Mammary epithelial cell (primary cell): ENCODE measurements at regions of chr14 and their contacts with region 1.

Region 1: DNA sequence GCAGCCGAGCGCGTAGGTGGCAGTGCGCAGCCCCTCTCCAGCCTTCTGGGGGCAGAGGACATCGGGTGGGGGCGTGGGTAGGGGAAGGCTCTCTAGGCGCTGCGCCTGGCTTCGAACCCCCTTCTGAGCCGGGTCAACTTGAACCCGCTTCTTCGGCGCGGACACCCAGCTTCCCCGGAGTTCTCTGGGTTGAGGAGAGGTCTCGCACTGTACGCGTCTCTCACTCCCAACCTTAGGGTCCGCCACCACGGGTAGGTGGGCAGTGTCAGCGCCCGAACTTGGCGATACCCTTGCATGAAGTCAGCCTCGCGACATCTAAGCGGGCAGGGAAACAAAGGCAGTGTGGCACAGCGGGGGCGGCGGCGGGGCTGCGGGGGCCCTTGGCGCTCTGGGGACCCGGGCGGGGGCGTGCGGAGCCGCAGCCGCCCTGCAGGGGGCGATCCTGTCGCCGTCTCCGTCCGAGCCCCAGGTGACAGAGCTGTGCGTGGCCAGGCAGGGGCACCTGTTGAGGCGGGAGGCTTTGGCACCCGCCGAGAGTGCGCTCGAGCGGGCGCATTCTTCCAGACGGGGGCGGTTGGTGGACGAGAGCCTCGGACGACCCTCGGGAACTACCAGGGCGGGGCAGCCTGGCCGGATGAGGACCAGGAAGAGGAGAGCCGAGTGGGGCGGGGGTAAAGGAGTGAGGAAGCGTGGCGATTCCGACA is 1.1 kb downstream of the GALNT16 start:
- DNase-seq: no peak
- H3K4me3 ChIP-seq: peak overlapping the region in 2 of 3 experiments; percentile 19 to 43
- H3K27ac ChIP-seq: no peak overlapping the region
- H3K4me1 ChIP-seq: peaks cover 14% of the 10 kb centered on the region
- H3K27me3 ChIP-seq: peaks cover 34% of the 10 kb centered on the region
- CTCF ChIP-seq: peak; percentile 29 to 49

Region 2: GRCh38 chr14:69312608-69313007 is 51.6 kb after region 1 on chr14:
- CTCF ChIA-PET with region 1: no interaction called
- dilution Hi-C with region 1: loop called (anchors 5 kb)
- in situ Hi-C with region 1: no loop called
- intact Hi-C with region 1: no loop called
- DNase-seq: no peak
- H3K4me3 ChIP-seq: no peak overlapping the region
- H3K27ac ChIP-seq: no peak overlapping the region
- H3K4me1 ChIP-seq: peaks cover 3% of the 10 kb centered on the region
- H3K27me3 ChIP-seq: peaks cover 4% of the 10 kb centered on the region
- CTCF ChIP-seq: no peak

Region 3: DNA sequence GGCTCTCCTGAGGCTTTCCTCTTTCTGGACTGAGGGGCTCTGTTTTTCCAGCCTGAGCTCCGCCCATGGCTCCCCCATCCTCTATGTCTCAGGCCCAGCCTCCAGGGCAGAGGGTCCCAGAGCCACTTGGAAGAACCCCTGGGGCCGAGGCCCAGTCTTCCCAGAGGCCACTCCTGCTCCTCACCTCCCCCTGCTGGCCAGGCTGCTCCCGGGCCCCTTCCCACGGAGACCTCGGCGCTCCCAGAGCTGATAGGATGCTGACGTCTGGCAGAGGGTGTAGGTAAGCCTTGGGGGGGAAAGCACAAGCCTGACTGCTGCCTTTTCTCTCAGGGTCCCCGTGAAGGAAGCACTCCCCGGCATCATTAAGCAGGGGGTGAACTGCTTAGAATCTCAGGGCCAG is 85.7 kb after region 1 on chr14:
- CTCF ChIA-PET with region 1: no interaction called
- dilution Hi-C with region 1: loop called (anchors 5 kb)
- in situ Hi-C with region 1: no loop called
- intact Hi-C with region 1: loop called (anchors 5 kb)
- DNase-seq: no peak
- H3K4me3 ChIP-seq: no peak overlapping the region
- H3K27ac ChIP-seq: no peak overlapping the region
- H3K4me1 ChIP-seq: no peaks in the 10 kb centered on the region
- H3K27me3 ChIP-seq: no peaks in the 10 kb centered on the region
- CTCF ChIP-seq: peak; percentile 39 to 47

Region 4: GRCh38 chr14:69354383-69355153 is 93.6 kb after region 1 on chr14:
- CTCF ChIA-PET with region 1: interaction called, 4 read pairs
- dilution Hi-C with region 1: loop called (anchors 5 kb)
- in situ Hi-C with region 1: no loop called
- intact Hi-C with region 1: loop called (anchors 5 kb)
- DNase-seq: peak; percentile 64
- H3K4me3 ChIP-seq: no peak overlapping the region
- H3K27ac ChIP-seq: no peak overlapping the region
- H3K4me1 ChIP-seq: no peaks in the 10 kb centered on the region
- H3K27me3 ChIP-seq: no peaks in the 10 kb centered on the region
- CTCF ChIP-seq: no peak

Region 5: DNA sequence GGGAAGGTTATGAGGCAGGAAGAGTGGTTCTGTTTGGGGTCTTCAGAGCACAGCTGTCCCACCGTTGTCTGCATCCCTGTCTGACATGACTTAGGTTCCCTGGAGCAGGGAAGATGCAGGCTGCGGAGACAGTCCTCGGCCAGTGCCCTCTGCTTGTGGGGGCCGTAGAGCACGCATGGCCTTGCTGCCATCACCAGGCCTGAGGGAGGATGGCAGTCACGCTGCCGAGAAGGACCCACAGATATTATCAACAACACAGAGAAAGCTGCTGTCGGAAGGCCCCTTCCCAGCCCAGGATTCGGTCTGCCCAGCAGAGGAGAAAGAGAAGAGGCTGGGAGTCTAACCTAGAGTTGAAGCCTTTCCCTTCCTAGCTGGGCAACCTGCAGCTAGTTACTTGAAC is 102.0 kb after region 1 on chr14:
- CTCF ChIA-PET with region 1: no interaction called
- dilution Hi-C with region 1: no loop called
- in situ Hi-C with region 1: no loop called
- intact Hi-C with region 1: loop called (anchors 5 kb)
- DNase-seq: no peak
- H3K4me3 ChIP-seq: no peak overlapping the region
- H3K27ac ChIP-seq: no peak overlapping the region
- H3K4me1 ChIP-seq: no peaks in the 10 kb centered on the region
- H3K27me3 ChIP-seq: no peaks in the 10 kb centered on the region
- CTCF ChIP-seq: no peak